RWPE1 (cell line): ENCODE measurements at regions of chr16 and their contacts with region 1.

Region 1: DNA sequence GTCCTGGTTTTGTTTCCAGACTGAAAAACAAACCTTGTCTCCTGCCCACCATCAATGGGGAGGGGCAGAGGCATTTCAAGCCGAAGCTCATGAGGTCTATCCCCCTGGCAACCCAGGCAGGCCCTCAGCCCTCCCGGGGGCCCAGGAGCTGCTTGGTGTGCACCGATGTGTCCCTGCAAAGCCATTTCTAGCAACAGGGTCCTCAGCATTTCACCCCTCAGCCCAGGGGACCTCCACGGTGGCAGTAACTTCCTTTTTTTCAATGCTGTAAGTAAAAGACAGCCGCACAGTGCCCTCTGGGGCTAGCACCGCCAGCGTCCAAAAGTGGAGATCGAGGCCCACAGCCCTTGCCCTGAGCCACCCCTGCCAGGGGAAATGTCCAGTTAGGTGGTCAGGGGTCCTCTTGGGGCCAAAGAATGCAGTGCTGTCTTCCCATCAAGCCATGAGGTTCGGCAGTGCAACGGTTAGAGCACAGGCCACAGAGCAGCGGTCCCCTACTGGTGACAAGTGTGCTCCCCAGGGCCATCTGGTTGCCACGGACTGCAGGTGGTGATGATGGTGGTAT is 79.9 kb downstream of the LITAF start:
- DNase-seq: no peak
- H3K27ac ChIP-seq: peak overlapping the region; percentile 17; the same call in 1 of the 2 replicates
- CTCF ChIP-seq: no peak

Region 2: GRCh38 chr16:11470676-11471415 is 36.0 kb before region 1 on chr16:
- CTCF ChIA-PET with region 1: interaction called, 3 read pairs
- POLR2A ChIA-PET with region 1: interaction called, 11 read pairs
- DNase-seq: no peak
- H3K27ac ChIP-seq: no peak overlapping the region
- CTCF ChIP-seq: no peak

Region 3: GRCh38 chr16:11524098-11524750 is 17.4 kb after region 1 on chr16:
- CTCF ChIA-PET with region 1: no interaction called
- POLR2A ChIA-PET with region 1: interaction called, 14 read pairs
- DNase-seq: no peak
- H3K27ac ChIP-seq: no peak overlapping the region
- CTCF ChIP-seq: no peak

Region 4: DNA sequence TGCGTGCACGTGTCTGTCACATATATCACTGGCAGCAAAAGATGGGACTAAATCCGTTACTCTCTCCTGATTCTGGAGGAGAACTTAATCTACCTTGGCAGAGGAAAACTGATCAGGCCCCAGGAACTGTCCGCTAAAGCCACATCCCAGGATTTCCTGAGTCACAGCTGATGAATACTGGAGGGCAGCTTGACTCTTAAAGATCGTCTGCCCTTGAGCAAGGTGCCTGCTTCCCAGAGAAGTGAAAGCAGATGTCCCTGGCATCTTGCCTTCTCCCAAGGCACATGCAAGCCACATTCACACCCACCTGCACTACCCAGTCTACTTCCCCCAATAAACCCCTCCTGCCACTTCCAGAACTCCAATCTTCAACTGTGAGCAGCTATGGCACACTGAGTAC is 1197.1 kb after region 1 on chr16:
- CTCF ChIA-PET with region 1: no interaction called
- POLR2A ChIA-PET with region 1: no interaction called
- DNase-seq: no peak
- H3K27ac ChIP-seq: no peak overlapping the region
- CTCF ChIP-seq: no peak